ENCODE measurements at regions of chr14 and their contacts with region 1.

Region 1: DNA sequence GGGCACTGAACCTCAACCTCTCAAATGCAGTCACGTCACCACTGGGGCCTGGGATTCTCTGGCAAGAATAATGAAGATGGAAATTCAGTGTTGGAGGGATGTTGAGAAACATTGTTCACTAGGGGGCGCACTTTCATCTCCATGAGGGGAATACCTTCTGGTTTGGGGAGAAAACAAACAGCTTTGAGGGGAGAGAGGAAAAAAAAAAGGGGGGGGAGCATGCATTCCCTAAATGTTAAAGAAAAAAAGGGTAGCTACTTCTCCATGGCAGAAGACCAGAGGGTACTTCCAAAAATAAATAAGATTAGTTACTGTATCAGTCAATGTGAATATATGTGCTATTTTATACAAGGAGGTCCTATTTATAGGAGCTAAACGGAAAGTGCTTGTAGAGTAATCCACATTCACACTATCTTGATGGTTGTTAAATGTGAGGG is 5.8 kb upstream of the TBPL2 start:
- DNase-seq: peak; percentile 74 to 87
- H3K4me3 ChIP-seq: no peak overlapping the region
- H3K4me1 ChIP-seq: peaks cover 11% of the 10 kb centered on the region
- H3K27me3 ChIP-seq: no peaks in the 10 kb centered on the region

Region 2: DNA sequence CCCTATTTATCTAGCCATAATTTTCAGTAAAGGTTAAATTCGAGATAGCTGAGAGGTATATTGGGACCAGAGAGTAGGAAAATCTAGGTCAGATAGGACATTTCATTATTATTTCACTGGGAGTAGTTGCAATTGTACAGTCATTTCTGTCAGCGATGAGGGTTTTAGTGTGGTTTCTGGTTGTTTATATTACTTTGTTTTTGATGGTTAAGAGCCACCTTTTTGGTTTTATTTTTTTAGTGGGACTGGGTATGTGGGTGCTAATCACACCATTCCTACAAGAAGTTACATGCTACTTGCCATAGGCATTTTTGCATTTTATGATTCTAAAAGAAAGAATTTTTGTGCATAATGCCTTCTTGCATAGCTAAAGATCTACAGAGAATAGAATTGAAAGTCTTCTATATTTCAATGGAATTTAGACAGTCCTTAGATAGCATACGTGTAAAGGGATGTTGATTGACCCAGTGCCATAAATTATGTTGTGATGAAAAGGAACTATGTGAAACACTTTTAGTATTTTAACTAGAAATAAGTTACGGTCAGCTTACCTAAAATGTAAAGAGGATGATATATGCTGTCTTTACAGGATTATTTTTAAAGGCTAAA is 218.9 kb after region 1 on chr14:
- in situ Hi-C with region 1: loop called (anchors 25 kb)
- DNase-seq: peak in 1 of 2 experiments; percentile 96
- H3K4me3 ChIP-seq: no peak overlapping the region
- H3K4me1 ChIP-seq: peaks cover 20% of the 10 kb centered on the region
- H3K27me3 ChIP-seq: no peaks in the 10 kb centered on the region

Measured in HAP-1 (cell line).